Upper lobe of right lung (tissue), 1 donor: ENCODE measurements at regions of chr2 and their contacts with region 1.

Region 1: DNA sequence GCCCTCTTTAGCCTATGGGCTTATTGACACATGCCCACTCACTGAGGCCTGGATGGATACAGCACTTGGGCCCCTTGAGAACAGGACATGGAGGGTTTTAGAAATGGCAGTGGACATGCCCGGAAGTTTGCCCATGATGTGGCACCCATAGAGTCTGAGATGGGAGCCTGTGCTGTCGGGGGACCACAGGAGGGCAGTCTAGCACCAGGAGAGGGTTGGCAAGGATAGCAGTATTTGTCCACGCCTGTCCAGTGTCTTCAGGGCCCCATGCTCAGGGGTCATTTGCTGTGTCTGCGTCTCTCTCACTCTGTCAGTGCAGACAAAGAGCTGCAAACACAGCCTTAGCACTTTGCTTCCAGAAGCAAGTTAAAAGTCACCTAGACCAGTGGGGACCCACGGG is 48.7 kb downstream of the IL1RL2 start:
- DNase-seq: no peak
- ATAC-seq: peak; percentile 69
- H3K4me3 ChIP-seq: no peak overlapping the region
- H3K27ac ChIP-seq: no peak overlapping the region
- H3K4me1 ChIP-seq: no peaks in the 10 kb centered on the region
- H3K27me3 ChIP-seq: no peaks in the 10 kb centered on the region
- CTCF ChIP-seq: peak; percentile 39

Region 2: DNA sequence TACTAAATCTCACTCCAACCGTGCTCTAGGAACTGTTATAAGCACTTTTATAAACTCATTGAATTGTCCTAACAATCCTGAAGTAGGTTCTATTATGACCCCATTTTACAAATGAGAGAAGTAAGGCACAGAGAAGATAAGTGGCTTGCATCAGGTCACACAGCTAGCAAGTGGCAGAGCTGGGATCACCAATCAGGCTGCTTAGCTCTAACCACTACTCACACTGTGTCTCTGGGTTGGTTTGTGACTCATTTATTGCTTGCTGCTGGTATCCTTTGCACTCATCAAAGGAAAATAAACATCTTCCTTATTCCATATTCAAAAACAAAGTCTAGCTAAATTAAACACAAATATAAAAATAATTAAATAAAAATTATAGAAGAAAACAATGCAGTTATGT is 286.2 kb before region 1 on chr2:
- intact Hi-C with region 1: no loop called
- DNase-seq: no peak
- ATAC-seq: no peak
- H3K4me3 ChIP-seq: no peak overlapping the region
- H3K27ac ChIP-seq: no peak overlapping the region
- H3K4me1 ChIP-seq: no peaks in the 10 kb centered on the region
- H3K27me3 ChIP-seq: no peaks in the 10 kb centered on the region
- CTCF ChIP-seq: no peak

Region 3: DNA sequence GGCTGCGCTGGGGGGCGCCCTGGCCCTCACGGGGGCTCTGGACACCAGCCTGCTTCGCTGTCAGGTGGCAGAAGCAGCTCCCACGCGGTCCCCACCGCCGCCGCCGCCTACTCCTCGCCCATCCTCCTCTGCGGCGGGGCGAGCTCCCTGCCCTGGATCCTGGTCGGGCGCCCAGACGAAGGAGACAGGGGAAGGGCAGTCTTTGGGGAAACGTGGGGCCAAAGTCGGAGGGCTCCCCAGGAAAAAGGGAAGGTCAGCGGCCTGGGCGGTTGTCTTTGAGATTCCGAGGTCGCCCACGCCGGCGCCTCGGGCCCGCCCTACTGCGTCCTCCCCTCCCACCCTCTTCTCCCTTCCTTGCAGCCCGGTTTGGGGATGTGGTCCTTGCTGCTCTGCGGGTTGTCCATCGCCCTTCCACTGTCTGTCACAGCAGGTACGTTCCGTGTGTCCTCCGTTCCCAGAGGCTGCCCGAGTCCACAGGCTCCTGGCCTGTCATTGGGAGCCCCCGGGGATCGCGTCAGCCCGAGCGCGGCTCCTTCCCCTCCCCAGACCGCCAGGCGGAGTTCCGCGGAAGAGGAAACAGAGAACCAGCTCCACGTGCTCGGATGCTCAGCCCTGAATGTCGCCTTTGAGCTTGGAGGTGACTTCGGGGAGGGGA is 47.9 kb before region 1 on chr2:
- intact Hi-C with region 1: loop called (anchors 10 kb)
- DNase-seq: peak; percentile 83
- ATAC-seq: peak; percentile 87
- H3K4me3 ChIP-seq: peak overlapping the region; percentile 54
- H3K27ac ChIP-seq: peak overlapping the region; percentile 18
- H3K4me1 ChIP-seq: no peaks in the 10 kb centered on the region
- H3K27me3 ChIP-seq: no peaks in the 10 kb centered on the region
- CTCF ChIP-seq: peak; percentile 35

Region 4: GRCh38 chr2:102677244-102678215 is 442.0 kb after region 1 on chr2:
- intact Hi-C with region 1: no loop called
- DNase-seq: no peak
- ATAC-seq: no peak
- H3K4me3 ChIP-seq: no peak overlapping the region
- H3K27ac ChIP-seq: no peak overlapping the region
- H3K4me1 ChIP-seq: no peaks in the 10 kb centered on the region
- H3K27me3 ChIP-seq: no peaks in the 10 kb centered on the region
- CTCF ChIP-seq: no peak

Region 5: DNA sequence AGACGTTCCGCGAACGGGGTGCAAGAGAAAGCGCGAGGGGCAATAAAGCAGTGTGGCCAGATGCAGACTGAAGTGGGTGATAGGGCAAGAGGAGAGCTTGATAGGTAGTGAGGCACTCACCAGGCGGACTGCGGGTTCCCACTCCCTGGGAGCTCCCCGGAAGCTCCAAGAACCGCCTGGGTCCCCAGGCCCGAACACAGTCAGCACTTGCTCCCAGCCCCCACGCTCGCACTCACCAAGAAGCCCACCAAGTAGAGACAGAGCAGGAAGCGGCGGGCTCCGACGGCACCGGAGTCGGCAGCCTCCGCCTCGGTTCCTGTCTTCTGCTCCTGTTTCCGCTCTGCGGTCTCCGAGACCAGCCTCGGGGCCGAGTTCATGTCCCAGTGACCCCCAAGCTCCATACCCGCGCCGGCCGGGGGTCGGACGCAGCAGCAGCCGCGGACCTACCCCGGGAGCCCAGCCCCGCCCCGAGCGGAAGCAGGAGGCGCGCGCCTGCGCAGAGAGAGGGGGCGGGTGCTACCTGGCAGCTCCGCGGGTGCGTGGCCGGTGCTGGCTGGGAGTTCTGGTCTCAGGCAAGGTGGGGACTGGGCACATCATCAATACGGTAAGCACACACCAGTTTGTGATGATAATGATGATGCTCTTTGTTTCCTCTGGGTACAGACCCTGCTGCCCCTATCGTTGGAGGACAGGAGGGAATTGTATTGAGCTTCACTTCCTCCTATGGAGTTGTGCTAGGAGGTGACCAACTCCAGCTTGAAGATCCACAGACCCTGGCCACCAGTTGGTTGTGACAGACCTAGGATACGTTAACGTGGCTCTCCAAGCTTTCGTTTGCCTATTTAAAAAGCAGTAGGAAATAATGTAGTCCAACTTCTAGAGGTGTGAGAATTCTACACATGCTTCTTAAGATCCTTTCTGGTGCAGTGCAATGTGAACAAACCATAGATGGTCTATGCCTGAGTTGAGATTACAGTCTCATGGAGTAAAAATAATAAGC is 501.2 kb after region 1 on chr2:
- intact Hi-C with region 1: no loop called
- DNase-seq: peak; percentile 94
- ATAC-seq: peak; percentile 97
- H3K4me3 ChIP-seq: peak overlapping the region; percentile 86
- H3K27ac ChIP-seq: peak overlapping the region; percentile 79
- H3K4me1 ChIP-seq: peaks cover 9% of the 10 kb centered on the region
- H3K27me3 ChIP-seq: no peaks in the 10 kb centered on the region
- CTCF ChIP-seq: peak; percentile 3